ENCODE measurements at regions of chr9 and their contacts with region 1.

Region 1: GRCh38 chr9:13033959-13034693 is 245.4 kb downstream of the MPDZ start:
- DNase-seq: peak; percentile 64 to 92
- H3K4me3 ChIP-seq: no peak overlapping the region
- CTCF ChIP-seq: no peak
- POLR2A ChIP-seq: no peak

Region 2: GRCh38 chr9:12095931-12096330 is 938.2 kb before region 1 on chr9:
- intact Hi-C with region 1: no loop called
- DNase-seq: no peak
- H3K4me3 ChIP-seq: no peak overlapping the region
- CTCF ChIP-seq: no peak
- POLR2A ChIP-seq: no peak

Region 3: GRCh38 chr9:13002740-13003139 is 31.4 kb before region 1 on chr9:
- intact Hi-C with region 1: no loop called
- DNase-seq: no peak
- H3K4me3 ChIP-seq: no peak overlapping the region
- CTCF ChIP-seq: no peak
- POLR2A ChIP-seq: no peak

Region 4: DNA sequence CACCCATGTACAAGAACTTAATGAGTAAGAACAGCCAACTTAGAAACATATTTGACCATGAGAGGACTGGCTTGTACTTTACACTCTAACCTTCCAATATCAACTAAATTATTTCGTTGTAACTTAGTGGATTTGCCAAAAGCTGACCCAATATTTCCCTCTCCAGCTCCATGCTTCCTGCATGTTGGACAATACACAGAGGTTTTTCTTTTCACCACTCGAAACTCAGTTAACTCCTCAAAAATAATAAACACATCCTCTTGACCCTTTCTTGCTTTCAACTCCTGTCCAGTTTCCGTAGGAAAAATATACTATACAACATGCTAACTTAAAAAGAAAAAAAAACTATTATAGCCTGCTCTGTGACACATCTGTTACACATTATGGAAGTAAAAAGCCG is 56.5 kb after region 1 on chr9:
- intact Hi-C with region 1: loop called (anchors 5 kb)
- DNase-seq: no peak
- H3K4me3 ChIP-seq: no peak overlapping the region
- CTCF ChIP-seq: no peak
- POLR2A ChIP-seq: no peak

Region 5: DNA sequence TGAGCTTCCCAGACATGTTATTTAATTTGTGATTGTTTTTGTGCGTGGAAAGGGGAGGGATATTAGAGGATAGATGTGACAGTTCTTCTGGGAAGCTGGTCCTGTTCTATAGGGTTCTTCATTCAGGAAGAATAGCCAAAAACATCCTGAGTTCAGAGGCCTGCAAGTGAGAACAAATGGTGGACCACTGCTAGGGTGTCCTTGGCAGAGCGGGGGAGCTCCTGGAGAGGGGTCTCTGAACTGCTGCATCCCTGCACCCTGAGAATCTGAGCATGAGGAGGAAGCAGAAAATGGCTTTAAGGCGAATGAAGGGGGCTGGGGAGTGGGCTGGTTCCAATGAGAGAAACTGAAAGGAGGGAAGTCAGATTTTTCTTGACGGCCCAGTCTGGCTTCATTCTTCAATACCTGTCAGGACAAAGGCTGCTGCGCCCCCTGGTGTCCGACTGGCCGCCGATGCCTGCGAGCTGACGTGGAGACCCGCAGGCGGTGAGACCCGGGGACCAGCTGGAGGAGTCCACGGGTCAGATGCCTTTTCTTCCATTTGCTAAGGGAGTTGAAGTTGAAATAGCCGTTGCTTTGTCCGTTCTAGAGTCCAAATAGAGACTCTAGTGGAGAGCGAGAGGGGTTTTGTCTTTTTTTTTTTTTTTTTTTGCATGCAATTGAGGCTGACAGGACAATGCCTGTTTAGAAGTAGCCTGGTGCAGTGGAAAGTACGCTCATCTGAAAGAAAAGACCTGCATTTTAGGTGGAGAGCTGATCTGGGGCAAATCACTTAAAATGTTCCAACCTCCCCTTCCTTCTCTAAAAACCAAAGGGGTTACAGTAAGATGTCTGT is 1319.3 kb after region 1 on chr9:
- intact Hi-C with region 1: loop called (anchors 10 kb)
- DNase-seq: peak; percentile 93 to 99
- H3K4me3 ChIP-seq: no peak overlapping the region
- CTCF ChIP-seq: peak in 1 of 3 donors; percentile 66
- POLR2A ChIP-seq: no peak